GM23248 (cell line): ENCODE measurements at regions of chr3 and their contacts with region 1.

Region 1: GRCh38 chr3:73056014-73056844 is 5.2 kb upstream of the EBLN2 start:
- DNase-seq: peak; percentile 72
- H3K4me3 ChIP-seq: no peak overlapping the region
- H3K27ac ChIP-seq: peak overlapping the region; percentile 12
- H3K4me1 ChIP-seq: peaks cover 34% of the 10 kb centered on the region
- H3K27me3 ChIP-seq: no peaks in the 10 kb centered on the region

Region 2: GRCh38 chr3:72949016-72949415 is 107.2 kb before region 1 on chr3:
- in situ Hi-C with region 1: loop called (anchors 10 kb)
- DNase-seq: no peak
- H3K4me3 ChIP-seq: no peak overlapping the region
- H3K27ac ChIP-seq: no peak overlapping the region
- H3K4me1 ChIP-seq: peaks cover 6% of the 10 kb centered on the region
- H3K27me3 ChIP-seq: no peaks in the 10 kb centered on the region